BJ (cell line): ENCODE measurements at regions of chr6 and their contacts with region 1.

Region 1: DNA sequence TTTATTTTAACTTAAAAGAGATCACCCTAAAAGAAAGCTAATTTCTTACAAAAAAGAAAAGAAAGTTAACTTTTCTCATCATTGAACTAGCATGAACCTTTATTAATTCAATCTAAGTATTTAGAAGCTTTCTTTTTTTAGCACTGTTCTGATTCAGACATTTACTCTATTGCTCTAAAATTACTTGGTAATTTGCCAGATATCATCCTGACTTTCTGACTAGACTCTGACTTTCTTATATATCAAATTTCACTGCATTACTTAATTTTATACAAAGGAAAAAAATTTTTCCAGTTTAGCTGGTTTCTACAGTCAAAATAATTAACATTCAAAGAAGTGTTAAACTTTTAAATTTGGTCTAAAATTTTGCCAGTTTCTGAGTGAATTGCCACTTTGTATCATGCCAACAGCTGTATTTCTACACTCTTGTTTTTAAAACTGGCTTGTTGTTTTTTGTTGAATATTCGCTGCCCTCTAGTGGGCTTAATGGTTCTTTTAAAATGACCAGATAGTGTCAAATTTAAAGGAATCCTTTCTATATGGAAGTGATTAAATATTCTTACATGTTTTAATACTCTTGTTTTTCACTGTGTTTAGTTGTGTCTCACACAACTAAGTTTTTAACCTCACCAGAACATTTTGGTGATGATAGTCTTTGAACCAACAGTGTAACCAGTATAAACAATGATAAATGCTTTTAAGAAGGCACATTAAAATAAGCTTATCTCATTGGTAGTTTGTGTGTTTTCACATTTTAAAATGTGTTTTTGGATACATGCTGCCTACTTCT is 102.0 kb downstream of the POPDC3 start:
- DNase-seq: no peak
- H3K4me3 ChIP-seq: no peak overlapping the region
- H3K27me3 ChIP-seq: no peaks in the 10 kb centered on the region; the same call in 1 of the 2 replicates
- CTCF ChIP-seq: peak; percentile 48

Region 2: DNA sequence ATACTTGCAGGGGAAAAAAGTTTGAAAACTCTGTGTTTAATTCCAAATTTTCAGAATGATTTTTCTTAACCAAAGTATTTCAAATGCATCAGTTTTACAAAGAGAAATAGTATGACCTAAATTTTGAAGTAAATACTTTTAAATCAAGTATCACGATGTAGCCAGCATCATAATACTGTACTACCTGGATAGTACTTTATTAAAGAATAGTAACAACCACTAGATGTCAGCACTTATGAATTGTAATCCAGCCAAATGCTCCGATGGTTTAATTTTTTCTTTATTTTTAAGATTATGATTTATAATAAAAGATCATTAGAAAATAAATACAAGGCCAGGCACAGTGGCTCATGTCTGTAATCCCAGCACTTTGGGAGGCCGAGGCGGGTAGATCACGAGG is 180.9 kb before region 1 on chr6:
- CTCF ChIA-PET with region 1: interaction called, 11 read pairs
- POLR2A ChIA-PET with region 1: no interaction called
- DNase-seq: no peak
- H3K4me3 ChIP-seq: no peak overlapping the region
- H3K27me3 ChIP-seq: no peaks in the 10 kb centered on the region
- CTCF ChIP-seq: 0 out of 2 replicates have a peak, but pooled peaks have one; percentile 14

Region 3: GRCh38 chr6:104995989-104996617 is 81.7 kb before region 1 on chr6:
- CTCF ChIA-PET with region 1: interaction called, 44 read pairs
- POLR2A ChIA-PET with region 1: no interaction called
- DNase-seq: no peak
- H3K4me3 ChIP-seq: no peak overlapping the region
- H3K27me3 ChIP-seq: no peaks in the 10 kb centered on the region
- CTCF ChIP-seq: peak; percentile 18; the same call in 1 of the 2 replicates

Region 4: DNA sequence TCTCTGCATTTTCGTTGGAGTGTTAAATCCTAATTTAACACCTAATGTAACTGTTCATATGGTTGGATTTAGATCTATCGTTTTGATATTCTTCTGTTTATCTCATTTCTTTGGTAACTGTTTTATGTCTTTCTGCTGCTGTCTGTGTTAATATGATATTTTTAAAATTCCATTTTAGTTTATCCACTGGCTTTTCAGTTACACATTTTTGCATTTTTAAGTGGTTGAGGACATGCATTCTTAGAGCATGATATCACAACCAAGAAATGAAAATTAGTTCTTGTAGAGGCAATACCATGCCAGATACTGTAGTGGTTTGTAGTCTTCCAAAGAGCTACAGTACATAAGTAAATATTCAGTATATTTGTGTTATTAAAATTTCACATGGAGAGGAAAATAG is 62.3 kb before region 1 on chr6:
- CTCF ChIA-PET with region 1: interaction called, 14 read pairs
- POLR2A ChIA-PET with region 1: no interaction called
- DNase-seq: peak; percentile 48
- H3K4me3 ChIP-seq: no peak overlapping the region
- H3K27me3 ChIP-seq: no peaks in the 10 kb centered on the region
- CTCF ChIP-seq: no peak

Region 5: GRCh38 chr6:105474234-105474633 is 396.4 kb after region 1 on chr6:
- CTCF ChIA-PET with region 1: no interaction called
- POLR2A ChIA-PET with region 1: no interaction called
- DNase-seq: no peak
- H3K4me3 ChIP-seq: no peak overlapping the region
- H3K27me3 ChIP-seq: 0 out of 2 replicates have a peak, but pooled peaks cover 2% of the 10 kb centered on the region
- CTCF ChIP-seq: no peak